Heart left ventricle (tissue), 16 donors: ENCODE measurements at regions of chr2 and their contacts with region 1.

Region 1: GRCh38 chr2:201420442-201421113 is 30.7 kb downstream of the TRAK2 start:
- DNase-seq: no peak
- ATAC-seq: no peak
- H3K4me3 ChIP-seq: no peak overlapping the region
- H3K27ac ChIP-seq: peak overlapping the region in 8 of 12 donors; percentile 3 to 57 (median 33)
- H3K4me1 ChIP-seq: peaks cover 3 to 70% (median 42%) of the 10 kb centered on the region in 12 donors
- H3K27me3 ChIP-seq: no peaks in the 10 kb centered on the region
- CTCF ChIP-seq: no peak
- POLR2A ChIP-seq: no peak

Region 2: DNA sequence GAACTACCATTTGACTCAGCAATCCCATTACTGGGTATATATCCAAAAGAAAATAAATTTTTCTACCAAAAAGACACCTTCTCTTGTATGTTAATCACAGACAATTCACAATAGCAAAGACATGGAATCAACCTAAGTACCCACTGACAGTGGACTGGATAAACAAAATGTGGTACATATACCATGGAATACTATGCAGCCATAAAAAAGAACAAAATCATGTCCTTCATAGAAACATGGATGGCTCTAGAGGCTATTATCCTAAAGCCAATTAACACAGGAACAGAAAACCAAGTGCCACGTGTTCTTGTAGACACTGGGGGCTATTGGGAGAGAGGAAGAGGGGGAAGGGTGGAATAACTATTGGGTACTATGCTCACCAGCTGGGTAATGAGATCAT is 91.2 kb before region 1 on chr2:
- intact Hi-C with region 1: no loop called
- DNase-seq: no peak
- ATAC-seq: no peak
- H3K4me3 ChIP-seq: no peak overlapping the region
- H3K27ac ChIP-seq: no peak overlapping the region
- H3K4me1 ChIP-seq: no peaks in the 10 kb centered on the region
- H3K27me3 ChIP-seq: no peaks in the 10 kb centered on the region
- CTCF ChIP-seq: no peak
- POLR2A ChIP-seq: no peak

Region 3: DNA sequence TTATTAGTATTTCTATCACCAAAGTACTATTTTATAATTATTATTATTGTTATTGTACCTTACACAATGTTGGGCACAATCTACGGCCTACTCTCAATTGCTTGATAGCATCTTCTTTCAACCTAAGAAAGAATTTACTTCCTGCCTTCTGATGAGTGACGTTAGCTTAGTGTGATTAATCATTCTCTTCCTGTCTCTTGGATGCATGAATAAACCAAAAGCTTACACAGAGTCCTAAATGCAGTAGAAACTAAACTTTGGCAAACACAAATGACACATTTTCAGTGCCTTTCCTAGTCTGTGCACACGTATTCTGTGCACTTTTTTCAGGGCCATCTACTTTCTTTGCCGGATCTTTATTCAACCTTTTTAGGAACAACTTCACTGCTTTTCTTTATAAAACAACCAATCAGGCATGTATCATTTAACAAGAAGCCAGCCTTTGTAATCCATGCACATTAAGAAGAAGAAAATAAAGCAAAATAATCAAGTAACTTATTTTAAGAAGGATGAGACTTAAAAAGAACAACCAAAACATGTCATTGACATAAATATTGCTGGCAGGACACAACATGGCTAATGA is 11.6 kb after region 1 on chr2:
- intact Hi-C with region 1: loop called in 1 of 10 experiments (anchors 2 kb)
- DNase-seq: no peak
- ATAC-seq: peak in 3 of 4 donors; percentile 57 to 74 (median 73)
- H3K4me3 ChIP-seq: peak overlapping the region in 3 of 12 donors; percentile 3 to 23 (median 13)
- H3K27ac ChIP-seq: peak overlapping the region; percentile 37 to 91 (median 80)
- H3K4me1 ChIP-seq: peaks cover 2 to 68% (median 46%) of the 10 kb centered on the region in 12 donors
- H3K27me3 ChIP-seq: no peaks in the 10 kb centered on the region
- CTCF ChIP-seq: no peak
- POLR2A ChIP-seq: no peak

Region 4: DNA sequence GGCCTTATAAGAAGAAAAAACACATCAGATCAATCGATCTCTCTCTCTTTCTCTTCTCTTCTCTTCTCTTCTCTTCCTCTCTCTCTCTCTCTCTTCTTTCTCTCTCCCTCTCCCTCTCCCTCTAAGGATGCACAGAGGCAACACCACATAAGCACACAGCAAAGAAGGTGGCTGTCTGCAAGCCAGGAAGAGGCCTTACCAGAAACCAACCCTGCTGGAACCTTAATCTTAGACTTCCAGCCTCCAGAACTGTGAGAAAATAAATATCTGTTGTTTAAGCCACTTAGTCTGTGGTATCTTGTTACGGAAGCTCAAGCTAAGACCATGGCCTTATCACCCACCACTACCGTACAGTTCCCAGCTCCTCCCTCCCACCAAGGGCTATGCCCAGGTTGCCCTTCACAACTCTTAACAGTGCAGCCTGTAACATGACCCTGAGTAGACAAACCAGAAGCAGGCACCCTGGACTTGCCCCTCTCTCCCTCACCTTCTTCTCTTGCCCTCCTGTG is 247.9 kb after region 1 on chr2:
- intact Hi-C with region 1: no loop called
- DNase-seq: no peak
- ATAC-seq: no peak
- H3K4me3 ChIP-seq: no peak overlapping the region
- H3K27ac ChIP-seq: no peak overlapping the region
- H3K4me1 ChIP-seq: no peaks in the 10 kb centered on the region
- H3K27me3 ChIP-seq: no peaks in the 10 kb centered on the region
- CTCF ChIP-seq: no peak
- POLR2A ChIP-seq: no peak